Activated CD4-positive, alpha-beta T cell treated with anti-CD3 and anti-CD28 coated beads, Interleukin-2, amount 10 ng/mL, durations not matched to agents 24 days and 14 days (primary cell): ENCODE measurements at regions of chr4 and their contacts with region 1.

Region 1: DNA sequence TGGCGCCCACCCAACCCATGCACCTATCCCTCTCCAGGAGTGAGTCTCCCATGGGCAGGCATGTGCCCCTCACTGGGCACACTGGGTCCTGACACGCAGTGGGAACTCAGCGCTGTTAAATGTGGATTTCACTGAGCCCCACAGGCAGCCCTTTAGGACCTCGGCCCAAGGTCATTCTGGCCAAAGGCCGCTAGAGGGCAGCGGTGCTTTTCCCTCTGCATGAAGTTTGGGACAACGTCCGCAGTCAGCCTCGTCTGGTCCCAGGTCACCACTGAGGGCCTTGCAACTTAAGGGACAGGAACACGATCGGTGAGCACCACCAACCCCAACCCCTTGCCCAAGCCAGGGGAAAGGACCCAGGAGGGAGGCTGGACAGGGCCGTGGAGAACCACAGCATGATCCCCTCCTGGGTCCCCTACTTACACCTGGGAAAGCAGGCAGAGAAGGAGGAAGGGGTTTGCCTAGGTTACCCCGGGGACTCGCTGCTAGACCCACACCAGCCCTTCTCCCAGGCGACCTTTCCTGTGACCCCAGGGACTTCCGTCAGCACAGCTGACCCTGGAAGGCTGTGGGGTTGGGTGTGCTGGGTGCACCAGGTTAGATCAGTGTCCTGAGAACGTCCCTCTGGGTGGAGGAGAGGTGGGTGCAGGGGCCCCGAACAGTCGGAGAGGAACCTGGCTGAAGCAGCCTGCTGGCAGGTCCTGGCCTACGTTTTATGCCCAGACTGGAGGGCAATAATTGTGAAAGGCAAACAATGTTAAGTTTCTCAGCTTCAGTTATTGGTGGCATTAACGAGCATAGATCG is 24.0 kb downstream of the CYTL1 start:
- DNase-seq: peak; percentile 78
- H3K4me3 Mint-ChIP-seq: no peak overlapping the region
- H3K27ac Mint-ChIP-seq: no peak overlapping the region
- H3K4me1 Mint-ChIP-seq: no peaks in the 10 kb centered on the region
- H3K27me3 Mint-ChIP-seq: peaks cover 5% of the 10 kb centered on the region

Region 2: GRCh38 chr4:4838051-4838935 is 157.0 kb before region 1 on chr4:
- intact Hi-C with region 1: no loop called
- DNase-seq: no peak
- H3K4me3 Mint-ChIP-seq: no peak overlapping the region
- H3K27ac Mint-ChIP-seq: no peak overlapping the region
- H3K4me1 Mint-ChIP-seq: no peaks in the 10 kb centered on the region
- H3K27me3 Mint-ChIP-seq: peaks cover 2% of the 10 kb centered on the region

Region 3: DNA sequence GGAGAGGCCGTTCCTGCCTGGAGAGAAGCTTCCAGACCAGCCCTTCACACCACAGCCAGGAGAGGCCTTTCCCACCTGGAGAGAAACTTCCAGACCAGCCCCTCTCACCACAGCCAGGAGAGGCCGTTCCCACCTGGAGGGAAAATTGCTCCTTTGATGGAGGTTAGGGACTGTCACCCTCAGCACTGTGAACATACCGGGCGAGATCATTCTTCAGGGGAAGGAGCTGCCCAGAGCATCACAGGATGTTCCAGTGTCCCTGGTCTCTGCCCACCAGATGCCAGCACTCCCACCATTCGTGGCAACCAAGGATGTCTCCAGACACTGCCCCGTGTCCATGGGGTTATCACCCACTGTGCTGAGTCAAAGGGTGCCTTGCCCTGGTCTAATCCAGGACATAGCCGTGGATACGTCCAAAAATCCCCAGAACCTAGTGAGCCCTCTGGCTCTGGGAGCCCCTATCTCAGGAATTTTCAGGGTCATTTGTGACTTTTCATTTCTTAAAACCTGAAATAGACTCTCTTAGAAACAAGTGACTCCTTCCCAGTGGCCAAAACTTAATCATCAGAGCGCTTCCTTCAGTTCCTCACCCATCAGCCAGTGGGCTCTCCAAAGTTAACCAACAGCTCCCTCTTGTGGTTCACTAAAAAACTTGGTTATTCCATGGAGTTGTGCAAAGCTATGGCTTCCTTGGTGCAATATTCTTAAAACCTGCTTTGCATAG is 817.4 kb after region 1 on chr4:
- intact Hi-C with region 1: loop called (anchors 5 kb)
- DNase-seq: peak; percentile 75
- H3K4me3 Mint-ChIP-seq: no peak overlapping the region
- H3K27ac Mint-ChIP-seq: no peak overlapping the region
- H3K4me1 Mint-ChIP-seq: no peaks in the 10 kb centered on the region
- H3K27me3 Mint-ChIP-seq: no peaks in the 10 kb centered on the region